Cardiac septum (tissue), 1 donor: ENCODE measurements at regions of chr5 and their contacts with region 1.

Region 1: GRCh38 chr5:139633295-139634027 is 14.7 kb upstream of the CXXC5 start:
- DNase-seq: peak; percentile 88

Region 2: DNA sequence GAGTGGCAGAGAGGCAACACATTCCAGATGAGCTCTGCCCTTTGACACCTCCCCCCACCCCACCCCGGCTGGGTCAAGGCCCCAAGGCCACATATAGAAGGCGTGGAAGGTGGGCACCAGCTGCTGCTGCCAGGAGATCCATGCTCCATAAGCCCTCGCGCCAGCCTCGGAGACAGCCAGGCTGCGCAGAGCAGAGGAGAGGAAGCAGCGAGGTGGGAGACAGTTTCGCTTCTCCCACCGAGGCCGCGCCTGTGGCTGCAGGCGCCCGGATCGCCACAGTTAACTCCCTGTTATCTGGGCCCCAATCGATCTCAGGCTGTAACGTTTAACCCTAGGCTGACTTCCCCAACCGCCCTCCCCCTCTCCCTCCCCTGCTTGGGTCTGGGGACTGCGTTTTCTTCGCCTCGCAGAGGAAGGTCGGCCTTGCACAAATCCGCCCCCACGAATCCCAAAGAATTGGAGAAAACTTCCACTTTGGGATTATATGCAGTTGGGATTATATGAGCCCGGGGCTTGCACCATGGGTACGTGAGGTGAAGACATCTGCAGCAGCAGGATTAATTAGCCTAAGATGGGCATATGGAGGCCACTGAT is 13.5 kb after region 1 on chr5:
- intact Hi-C with region 1: loop called (anchors 1 kb)
- DNase-seq: peak; percentile 63

Region 3: GRCh38 chr5:139689631-139690063 is 56.2 kb after region 1 on chr5:
- intact Hi-C with region 1: loop called (anchors 1 kb)
- DNase-seq: no peak